ENCODE measurements at regions of chr7 and their contacts with region 1.

Region 1: DNA sequence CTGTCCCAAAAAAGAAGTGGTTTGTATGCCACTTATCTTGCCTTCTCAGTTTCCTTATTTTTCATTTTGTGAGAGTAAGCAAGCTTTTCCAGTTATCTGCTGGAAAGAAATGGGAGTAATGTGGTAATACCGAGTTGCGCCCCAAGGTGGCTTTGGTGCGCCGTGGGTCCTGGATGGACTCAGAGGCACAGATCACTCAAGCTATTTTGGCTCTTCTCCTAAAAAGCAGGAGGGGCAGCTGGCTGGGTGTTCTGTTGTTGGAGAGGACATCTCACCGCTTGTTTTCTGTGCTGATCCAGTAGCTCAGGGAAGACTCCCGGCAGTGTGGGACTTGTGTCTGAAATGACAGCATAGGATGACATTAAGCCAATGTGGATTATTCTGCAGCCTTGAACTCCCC is 16.4 kb downstream of the PRKRIP1 start:
- DNase-seq: peak in 7 of 9 donors; percentile 35 to 67 (median 56)
- ATAC-seq: peak; percentile 49
- H3K4me3 ChIP-seq: no peak overlapping the region
- H3K4me3 Mint-ChIP-seq: no peak overlapping the region
- H3K27ac ChIP-seq: peak overlapping the region; percentile 27
- H3K27ac Mint-ChIP-seq: peak overlapping the region in 8 of 9 donors; percentile 5 to 96 (median 58)
- H3K4me1 ChIP-seq: peaks cover 28 to 32% of the 10 kb centered on the region in 2 donors
- H3K4me1 Mint-ChIP-seq: peaks cover 25 to 48% (median 44%) of the 10 kb centered on the region in 7 donors
- H3K27me3 ChIP-seq: no peaks in the 10 kb centered on the region
- H3K27me3 Mint-ChIP-seq: no peaks in the 10 kb centered on the region

Region 2: GRCh38 chr7:102425639-102426267 is 13.2 kb after region 1 on chr7:
- CTCF ChIA-PET with region 1: interaction called, 44 read pairs
- POLR2A ChIA-PET with region 1: interaction called, 510 read pairs
- intact Hi-C with region 1: loop called (anchors 1 kb)
- DNase-seq: peak in 8 of 9 donors; percentile 63 to 87 (median 78)
- ATAC-seq: peak; percentile 90
- H3K4me3 ChIP-seq: peak overlapping the region; percentile 77
- H3K4me3 Mint-ChIP-seq: peak overlapping the region; percentile 84 to 96 (median 88)
- H3K27ac ChIP-seq: peak overlapping the region; percentile 96
- H3K27ac Mint-ChIP-seq: peak overlapping the region; percentile 98 to 100 (median 100)
- H3K4me1 ChIP-seq: peaks cover 40 to 77% of the 10 kb centered on the region in 2 donors
- H3K4me1 Mint-ChIP-seq: peaks cover 54 to 86% (median 65%) of the 10 kb centered on the region in 7 donors
- H3K27me3 ChIP-seq: no peaks in the 10 kb centered on the region
- H3K27me3 Mint-ChIP-seq: no peaks in the 10 kb centered on the region

Region 3: DNA sequence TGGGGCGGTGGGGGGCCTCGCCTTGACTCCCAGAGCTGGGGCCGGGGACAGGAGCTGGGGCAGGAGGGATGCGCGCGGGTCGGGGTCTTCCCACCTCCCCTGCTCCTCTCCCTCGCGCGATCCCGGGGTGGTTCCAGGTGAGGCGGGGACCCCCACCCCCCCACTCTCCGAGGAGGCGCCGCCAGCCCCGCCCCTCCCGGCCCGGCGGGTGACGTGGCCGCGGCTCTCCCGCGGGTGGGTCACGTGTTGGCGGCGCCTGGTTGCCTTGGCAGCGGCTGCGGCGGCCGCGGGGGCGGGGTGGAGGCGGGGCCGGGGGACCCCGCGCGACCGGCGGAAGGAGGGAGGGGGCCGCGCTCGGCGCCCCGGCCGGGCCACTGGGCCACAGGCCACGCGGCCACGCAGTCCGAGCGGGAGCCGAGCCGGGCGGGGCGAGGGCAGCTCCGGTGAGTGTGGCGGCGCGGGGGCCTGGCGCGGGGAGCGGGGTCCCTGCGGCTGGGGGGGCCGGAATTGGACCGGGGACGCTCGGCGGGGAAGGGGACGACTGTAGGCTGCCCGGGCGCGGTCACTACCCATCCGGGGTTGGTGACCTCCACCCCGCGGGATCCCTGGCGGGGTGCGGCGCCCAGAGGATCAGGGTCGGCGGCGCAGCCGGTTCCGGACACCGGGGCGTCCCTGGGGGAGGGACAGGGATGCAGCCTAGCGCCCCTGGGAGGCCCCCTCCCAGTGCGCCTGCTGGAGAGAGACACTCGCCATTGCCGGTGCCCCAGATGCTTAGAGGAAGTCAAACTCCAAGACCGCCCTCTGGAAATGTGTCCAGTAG is 20.9 kb after region 1 on chr7 and contains the start of gene ORAI2:
- CTCF ChIA-PET with region 1: interaction called, 20 read pairs
- POLR2A ChIA-PET with region 1: interaction called, 510 read pairs
- intact Hi-C with region 1: loop called in 1 of 2 experiments (anchors 1 kb)
- DNase-seq: peak; percentile 72 to 94 (median 81)
- ATAC-seq: peak; percentile 86
- H3K4me3 ChIP-seq: peak within 1 kb of the TSS; percentile 59
- H3K4me3 Mint-ChIP-seq: peak within 1 kb of the TSS; percentile 76 to 91 (median 88)
- H3K27ac ChIP-seq: peak within 1 kb of the TSS; percentile 96
- H3K27ac Mint-ChIP-seq: peak within 1 kb of the TSS; percentile 97 to 100 (median 99)
- H3K4me1 ChIP-seq: peaks cover 34 to 55% of the 10 kb centered on the region in 2 donors
- H3K4me1 Mint-ChIP-seq: peaks cover 38 to 62% (median 49%) of the 10 kb centered on the region in 7 donors
- H3K27me3 ChIP-seq: no peaks in the 10 kb centered on the region
- H3K27me3 Mint-ChIP-seq: no peaks in the 10 kb centered on the region
- total RNA-seq, gene ORAI2: 19.9 to 72.6 (median 26.2) TPM

Region 4: GRCh38 chr7:102450242-102450641 is 37.7 kb after region 1 on chr7:
- CTCF ChIA-PET with region 1: interaction called, 32 read pairs
- POLR2A ChIA-PET with region 1: interaction called, 10 read pairs
- intact Hi-C with region 1: loop called (anchors 1 kb)
- DNase-seq: peak in 7 of 9 donors; percentile 50 to 65 (median 57)
- ATAC-seq: peak; percentile 91
- H3K4me3 ChIP-seq: no peak overlapping the region
- H3K4me3 Mint-ChIP-seq: no peak overlapping the region
- H3K27ac ChIP-seq: no peak overlapping the region
- H3K27ac Mint-ChIP-seq: peak overlapping the region in 5 of 9 donors; percentile 36 to 75 (median 62)
- H3K4me1 ChIP-seq: no peaks in the 10 kb centered on the region
- H3K4me1 Mint-ChIP-seq: peaks cover 0 to 5% (median 2%) of the 10 kb centered on the region in 7 donors
- H3K27me3 ChIP-seq: no peaks in the 10 kb centered on the region
- H3K27me3 Mint-ChIP-seq: no peaks in the 10 kb centered on the region

Measured in naive thymus-derived CD4-positive, alpha-beta T cell (primary cell).